ENCODE measurements at regions of chr3 and their contacts with region 1.

Region 1: DNA sequence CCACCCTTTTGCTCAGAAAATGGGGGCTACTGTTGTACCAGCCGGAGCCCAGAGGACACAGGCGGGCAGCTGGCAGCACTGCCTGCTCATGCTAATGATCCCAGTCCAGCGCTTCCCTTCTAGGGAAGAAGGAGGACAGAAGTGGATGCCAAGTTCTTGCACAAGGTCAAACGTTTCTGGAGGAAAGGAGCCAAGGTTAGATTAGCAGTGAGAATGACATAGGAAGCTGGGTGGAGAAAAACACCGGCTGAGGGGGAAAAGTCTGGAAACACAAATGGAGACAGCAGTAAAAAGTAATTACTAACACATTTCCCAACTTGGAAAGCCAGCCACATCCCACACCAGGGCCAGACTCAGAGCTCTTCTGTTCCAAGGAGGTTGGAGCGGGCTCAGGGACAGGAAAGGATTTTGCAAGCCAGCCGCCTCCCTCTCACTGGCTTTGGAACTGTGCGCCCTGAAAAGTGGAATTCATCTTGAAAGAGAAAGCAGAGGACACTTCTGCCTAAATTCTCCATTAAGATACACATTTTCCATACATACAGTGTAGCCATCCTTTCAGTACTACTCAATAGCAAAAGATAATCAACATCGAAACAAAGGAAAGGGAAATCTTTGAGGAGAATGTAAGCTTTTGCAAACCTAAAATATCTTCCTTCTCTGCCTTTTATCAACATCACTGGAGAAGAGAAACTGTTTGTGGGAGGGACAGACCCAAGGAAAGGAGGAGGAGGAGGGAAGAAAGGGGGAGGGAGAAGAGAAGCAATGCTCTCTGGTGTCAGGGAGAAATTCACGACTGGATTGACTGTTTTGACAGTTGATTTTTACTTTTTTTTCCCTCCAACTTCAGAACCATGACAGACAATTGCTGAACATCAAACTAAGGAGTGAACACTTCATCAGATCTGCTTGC is 133.6 kb downstream of the CD47 start:
- DNase-seq: peak; percentile 26 to 93
- H3K4me3 ChIP-seq: peak overlapping the region; percentile 14 to 57
- H3K27ac ChIP-seq: peak overlapping the region; percentile 80 to 83
- H3K4me1 ChIP-seq: peaks cover 9 to 11% of the 10 kb centered on the region in 2 donors
- H3K27me3 ChIP-seq: no peaks in the 10 kb centered on the region
- CTCF ChIP-seq: no peak

Region 2: DNA sequence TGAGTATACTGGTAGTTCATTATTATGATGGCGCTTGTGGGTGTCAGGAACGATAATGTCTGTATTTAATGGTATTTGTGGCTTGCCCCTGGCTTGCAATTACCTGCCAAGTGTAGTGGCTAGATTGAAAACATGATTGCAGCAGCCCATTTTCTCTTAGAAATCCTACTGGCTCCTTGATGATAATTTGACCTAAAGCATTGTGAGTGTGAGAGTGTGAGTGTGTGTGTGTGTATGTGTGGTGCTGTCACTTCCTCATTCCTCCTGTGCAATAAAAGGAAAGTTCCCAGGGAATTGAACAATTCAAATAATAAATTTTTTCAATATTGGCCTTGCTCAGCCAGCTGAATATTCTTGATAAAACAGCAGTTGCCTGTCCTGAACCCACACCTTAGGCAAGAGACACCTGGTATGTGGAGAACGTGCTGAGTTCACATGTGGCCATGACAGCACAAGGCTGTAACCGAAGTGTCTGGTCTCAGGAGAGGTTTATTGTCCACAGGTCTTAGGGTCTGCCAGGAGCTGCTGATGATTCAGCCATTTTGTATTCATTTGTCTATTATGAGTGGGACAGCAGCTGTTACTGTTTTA is 59.7 kb before region 1 on chr3:
- intact Hi-C with region 1: no loop called
- DNase-seq: no peak
- H3K4me3 ChIP-seq: no peak overlapping the region
- H3K27ac ChIP-seq: no peak overlapping the region
- H3K4me1 ChIP-seq: no peaks in the 10 kb centered on the region
- H3K27me3 ChIP-seq: no peaks in the 10 kb centered on the region
- CTCF ChIP-seq: no peak

Region 3: DNA sequence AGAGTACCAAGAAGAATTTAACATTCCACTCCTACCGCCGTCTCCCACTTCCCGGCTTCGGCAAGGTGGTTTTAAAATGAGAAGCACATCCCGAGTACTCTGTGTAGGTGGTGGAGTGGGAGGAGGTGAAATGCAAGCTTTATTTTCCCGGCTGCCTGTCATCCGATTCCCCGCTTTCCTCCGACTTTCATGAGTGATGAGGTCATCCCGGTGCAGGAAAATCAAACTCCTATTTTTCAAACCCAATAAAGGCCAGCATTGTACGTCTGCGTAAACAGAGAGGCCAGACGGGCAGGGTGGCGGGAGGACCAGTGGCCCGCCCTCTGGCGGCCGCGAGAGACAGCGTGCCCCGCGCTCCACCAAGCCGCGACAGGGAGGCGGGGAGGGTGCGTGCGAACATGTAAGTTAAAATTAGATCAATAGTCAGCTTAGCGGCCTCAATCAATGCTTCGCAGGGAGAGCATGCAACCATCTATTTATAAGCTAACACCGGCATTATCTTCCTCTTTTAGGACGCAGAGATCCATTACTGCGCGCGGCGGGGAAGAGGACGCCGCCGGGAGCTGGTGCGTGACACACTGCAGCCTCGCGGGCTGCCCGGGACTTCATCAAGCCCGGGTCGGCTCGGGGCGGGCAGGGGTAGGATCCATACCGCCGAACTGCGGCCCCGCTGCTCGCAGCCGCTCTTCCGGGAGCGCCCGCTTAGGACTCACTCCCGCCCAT is 29.7 kb before region 1 on chr3:
- intact Hi-C with region 1: loop called (anchors 1 kb)
- DNase-seq: peak in 1 of 2 donors; percentile 83
- H3K4me3 ChIP-seq: peak overlapping the region; percentile 51 to 75
- H3K27ac ChIP-seq: no peak overlapping the region
- H3K4me1 ChIP-seq: no peaks in the 10 kb centered on the region
- H3K27me3 ChIP-seq: no peaks in the 10 kb centered on the region
- CTCF ChIP-seq: peak; percentile 70 to 96 (median 91)

Region 4: DNA sequence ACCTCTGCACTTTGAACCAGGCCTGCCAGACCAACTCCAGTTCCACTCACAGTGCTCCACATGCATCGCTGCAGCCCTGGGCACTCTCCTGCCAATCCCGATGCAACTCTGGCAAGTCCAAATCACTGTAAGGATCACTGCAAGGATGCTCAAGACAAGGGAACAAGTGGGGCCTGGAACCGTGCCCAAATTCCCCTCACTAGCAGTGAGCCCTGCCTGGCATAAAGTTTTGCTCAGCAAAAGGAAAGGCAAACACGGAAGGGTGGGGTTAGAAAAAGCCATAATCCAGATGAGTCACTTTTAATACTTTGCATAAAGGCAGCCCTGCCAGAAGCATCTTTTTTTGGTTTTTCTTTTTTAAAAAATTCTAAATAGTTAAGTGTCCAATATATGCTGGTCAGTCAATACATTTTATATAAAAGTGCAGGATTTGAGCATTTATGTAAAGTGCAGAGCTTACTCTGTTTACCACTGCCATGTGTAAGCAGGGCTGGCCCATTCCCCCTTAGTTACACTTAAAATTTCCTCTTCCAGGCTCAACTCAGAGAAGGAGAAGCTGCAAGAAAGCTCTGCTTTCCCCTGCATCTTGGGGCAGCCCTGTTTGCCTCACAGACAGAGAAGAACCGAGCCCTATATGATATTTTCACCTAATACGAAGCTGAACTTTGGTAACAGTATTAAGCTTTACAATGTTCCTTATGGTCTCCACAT is 31.4 kb after region 1 on chr3:
- intact Hi-C with region 1: loop called (anchors 2 kb)
- DNase-seq: peak in 1 of 2 donors; percentile 68
- H3K4me3 ChIP-seq: no peak overlapping the region
- H3K27ac ChIP-seq: no peak overlapping the region
- H3K4me1 ChIP-seq: peaks cover 0 to 17% of the 10 kb centered on the region in 2 donors
- H3K27me3 ChIP-seq: no peaks in the 10 kb centered on the region
- CTCF ChIP-seq: no peak

Measured in ascending aorta (tissue), 2 donors.